SK-N-SH (cell line): ENCODE measurements at regions of chr6 and their contacts with region 1.

Region 1: GRCh38 chr6:17640477-17640917 is 40.4 kb downstream of the FAM8A1 start:
- DNase-seq: no peak
- H3K4me3 ChIP-seq: no peak overlapping the region
- H3K27ac ChIP-seq: no peak overlapping the region
- H3K4me1 ChIP-seq: peaks cover 0 to 6% of the 10 kb centered on the region in 2 experiments; a peak in 1 of 4 replicates
- H3K27me3 ChIP-seq: no peaks in the 10 kb centered on the region
- CTCF ChIP-seq: no peak
- EP300 ChIP-seq: no peak
- RAD21 ChIP-seq: no peak

Region 2: GRCh38 chr6:17628873-17629272 is 11.6 kb before region 1 on chr6:
- CTCF ChIA-PET with region 1: interaction called, 16 read pairs
- POLR2A ChIA-PET with region 1: no interaction called
- DNase-seq: no peak
- H3K4me3 ChIP-seq: no peak overlapping the region
- H3K27ac ChIP-seq: no peak overlapping the region
- H3K4me1 ChIP-seq: no peaks in the 10 kb centered on the region
- H3K27me3 ChIP-seq: no peaks in the 10 kb centered on the region
- CTCF ChIP-seq: no peak
- EP300 ChIP-seq: no peak
- RAD21 ChIP-seq: no peak